Activated B cell treated with CpG ODN at 0.5 μM for 24 hours (primary cell): ENCODE measurements at regions of chr1 and their contacts with region 1.

Region 1: DNA sequence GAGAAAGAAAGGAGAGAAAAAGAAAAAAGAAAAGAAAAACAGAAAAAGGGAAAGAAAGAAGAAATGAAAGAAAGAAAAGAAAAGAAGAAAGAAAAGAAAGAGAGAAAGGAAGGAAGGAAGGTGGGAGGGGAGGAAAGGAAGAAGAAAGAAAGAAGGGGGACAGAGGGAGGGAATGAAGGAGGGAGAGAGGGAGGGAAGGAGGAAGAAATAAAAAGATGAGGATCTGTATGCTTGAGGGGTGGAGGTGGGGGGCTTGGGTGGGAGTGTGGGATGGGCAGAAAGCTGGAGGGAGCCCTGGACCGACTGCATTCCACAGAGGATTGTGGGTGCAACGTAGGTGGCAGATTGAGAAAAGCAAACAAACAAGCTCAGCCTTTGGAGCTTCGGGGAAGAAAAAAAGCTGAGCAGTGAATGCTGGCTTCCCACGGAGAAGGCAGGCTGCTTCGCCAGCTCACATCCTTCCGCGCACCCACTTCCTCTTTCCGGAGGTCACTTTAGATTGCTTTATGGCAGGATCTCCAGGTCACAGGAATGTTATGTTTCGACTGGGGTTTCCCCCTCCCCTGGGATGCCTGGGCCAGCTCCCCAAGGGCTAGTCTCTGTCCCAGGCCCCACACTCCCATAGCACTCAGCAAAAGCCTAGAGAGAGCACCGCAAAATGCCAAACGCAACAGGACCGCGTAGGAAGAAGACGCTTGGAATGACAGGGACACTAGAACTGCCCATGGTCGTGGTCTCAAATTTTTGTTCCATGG is 20.7 kb upstream of the LGALS8 start:
- DNase-seq: no peak
- ATAC-seq: peak; percentile 28
- H3K4me3 Mint-ChIP-seq: peak overlapping the region; percentile 32
- H3K27ac Mint-ChIP-seq: no peak overlapping the region
- H3K4me1 Mint-ChIP-seq: peaks cover 11% of the 10 kb centered on the region
- H3K27me3 Mint-ChIP-seq: peaks cover 2% of the 10 kb centered on the region
- CTCF ChIP-seq: no peak

Region 2: DNA sequence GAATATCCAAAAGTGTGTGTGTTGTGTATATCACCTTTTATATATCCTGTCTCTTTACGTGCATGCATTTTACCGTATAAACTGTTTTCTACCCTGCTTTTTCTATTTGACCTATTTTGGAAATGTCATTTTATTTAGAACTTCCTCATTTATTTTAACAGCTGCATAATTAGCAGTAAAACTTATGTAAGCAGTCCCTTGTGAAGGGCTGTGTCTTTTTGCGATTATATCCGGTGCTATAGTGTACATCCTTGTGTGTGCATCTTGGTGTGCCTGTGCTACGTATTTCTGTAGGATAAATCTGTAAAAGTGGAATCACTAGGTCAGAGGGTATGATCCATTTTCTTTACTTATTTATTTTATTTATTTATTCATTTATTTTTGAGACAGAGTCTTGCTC is 27.9 kb after region 1 on chr1:
- CTCF ChIA-PET with region 1: no interaction called
- POLR2A ChIA-PET with region 1: interaction called, 10 read pairs
- intact Hi-C with region 1: no loop called
- DNase-seq: no peak
- ATAC-seq: peak; percentile 37
- H3K4me3 Mint-ChIP-seq: no peak overlapping the region
- H3K27ac Mint-ChIP-seq: peak overlapping the region; percentile 64
- H3K4me1 Mint-ChIP-seq: peaks cover 27% of the 10 kb centered on the region
- H3K27me3 Mint-ChIP-seq: no peaks in the 10 kb centered on the region
- CTCF ChIP-seq: no peak